ENCODE measurements at regions of chrX and their contacts with region 1.

Region 1: DNA sequence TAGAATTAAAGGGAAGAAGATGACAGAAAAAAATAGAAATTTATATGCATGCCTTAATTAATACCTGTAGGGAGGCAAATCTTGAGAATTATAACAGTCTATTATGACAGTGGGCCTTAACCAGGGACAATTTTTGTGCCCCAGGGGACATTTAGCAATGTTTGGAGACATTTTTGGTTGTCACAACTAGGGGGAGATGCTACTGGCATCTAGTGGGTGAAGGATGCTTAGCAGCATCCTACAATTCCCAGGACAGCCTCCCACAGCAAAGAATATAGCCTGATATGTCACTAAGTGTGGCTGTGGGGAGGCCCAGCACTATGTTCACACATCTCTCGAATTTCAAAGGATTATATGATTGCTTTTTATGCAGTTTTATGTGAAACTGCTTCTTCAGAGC is 10.5 kb downstream of the GPR82 start:
- DNase-seq: no peak
- ATAC-seq: peak; percentile 35
- H3K4me3 Mint-ChIP-seq: peak overlapping the region; percentile 75
- H3K27ac Mint-ChIP-seq: peak overlapping the region; percentile 85
- H3K4me1 Mint-ChIP-seq: peaks cover 41% of the 10 kb centered on the region
- H3K27me3 Mint-ChIP-seq: no peaks in the 10 kb centered on the region
- CTCF ChIP-seq: no peak

Region 2: DNA sequence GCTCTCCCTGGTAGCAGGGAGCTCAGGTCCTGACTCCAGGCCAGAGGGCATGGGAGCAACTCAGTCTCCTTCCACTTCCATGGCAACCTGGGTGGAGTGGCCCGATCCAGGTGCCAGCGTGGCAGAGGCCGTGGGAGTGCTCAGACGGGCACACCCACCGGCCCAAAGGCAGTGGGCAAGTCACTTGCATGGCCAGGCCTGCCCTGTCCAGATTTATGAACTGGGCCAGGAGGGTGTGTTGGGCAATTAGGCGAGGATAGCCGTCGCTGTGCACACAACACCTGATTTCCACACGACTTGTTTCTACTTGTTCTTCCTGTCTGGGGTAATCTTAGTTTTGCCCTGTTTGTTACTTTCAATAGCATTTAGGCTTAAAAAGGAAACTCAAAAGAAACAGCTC is 342.9 kb before region 1 on chrX:
- CTCF ChIA-PET with region 1: no interaction called
- POLR2A ChIA-PET with region 1: no interaction called
- intact Hi-C with region 1: no loop called
- DNase-seq: no peak
- ATAC-seq: no peak
- H3K4me3 Mint-ChIP-seq: no peak overlapping the region
- H3K27ac Mint-ChIP-seq: no peak overlapping the region
- H3K4me1 Mint-ChIP-seq: no peaks in the 10 kb centered on the region
- H3K27me3 Mint-ChIP-seq: no peaks in the 10 kb centered on the region
- CTCF ChIP-seq: no peak

Region 3: DNA sequence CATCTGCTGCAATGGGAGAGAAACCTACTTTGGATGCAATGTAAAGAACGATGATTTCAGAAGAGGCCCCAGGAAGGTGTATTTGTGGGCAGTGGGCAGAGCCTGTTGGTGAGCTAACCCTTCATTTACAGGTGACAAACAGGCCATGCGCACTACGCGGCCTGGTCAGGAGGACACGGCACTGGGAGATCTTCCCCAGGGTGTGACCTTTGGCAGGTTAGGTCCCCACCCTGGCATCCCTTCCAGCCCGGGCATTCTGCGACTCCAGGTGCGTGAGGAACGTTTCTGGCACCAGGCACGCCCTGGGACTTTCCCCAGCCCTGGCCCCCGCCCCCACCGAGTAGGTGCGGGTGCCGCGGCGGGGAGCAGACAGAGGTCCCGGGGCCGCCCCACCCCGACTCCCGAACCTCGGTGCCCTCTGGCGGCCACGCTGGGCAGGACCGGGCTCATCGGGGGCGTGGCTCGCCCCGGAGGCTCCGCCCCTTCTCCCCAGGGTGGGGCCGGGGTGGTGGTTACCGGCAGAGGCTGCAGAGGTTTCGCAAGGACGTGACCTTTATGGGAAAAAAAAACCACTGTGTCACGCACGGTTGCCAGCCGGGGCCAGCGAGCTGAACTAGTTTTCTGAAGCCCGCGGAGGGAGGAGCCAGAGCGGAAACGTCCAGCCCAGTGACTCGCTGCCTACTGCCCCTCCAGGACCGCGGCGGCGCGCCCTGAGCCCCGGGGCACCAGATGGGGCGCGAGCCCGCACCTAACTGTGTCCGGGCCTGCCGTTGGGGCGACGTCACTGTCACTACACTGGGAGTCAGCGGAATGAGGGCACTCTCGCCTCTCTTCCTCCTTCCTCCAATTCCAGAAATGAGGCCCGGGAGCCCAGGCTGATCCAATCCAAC is 292.4 kb before region 1 on chrX:
- CTCF ChIA-PET with region 1: no interaction called
- POLR2A ChIA-PET with region 1: interaction called, 5 read pairs
- intact Hi-C with region 1: loop called (anchors 5 kb)
- DNase-seq: peak; percentile 87
- ATAC-seq: peak; percentile 92
- H3K4me3 Mint-ChIP-seq: peak overlapping the region; percentile 73
- H3K27ac Mint-ChIP-seq: peak overlapping the region; percentile 53
- H3K4me1 Mint-ChIP-seq: peaks cover 25% of the 10 kb centered on the region
- H3K27me3 Mint-ChIP-seq: no peaks in the 10 kb centered on the region
- CTCF ChIP-seq: no peak

Region 4: DNA sequence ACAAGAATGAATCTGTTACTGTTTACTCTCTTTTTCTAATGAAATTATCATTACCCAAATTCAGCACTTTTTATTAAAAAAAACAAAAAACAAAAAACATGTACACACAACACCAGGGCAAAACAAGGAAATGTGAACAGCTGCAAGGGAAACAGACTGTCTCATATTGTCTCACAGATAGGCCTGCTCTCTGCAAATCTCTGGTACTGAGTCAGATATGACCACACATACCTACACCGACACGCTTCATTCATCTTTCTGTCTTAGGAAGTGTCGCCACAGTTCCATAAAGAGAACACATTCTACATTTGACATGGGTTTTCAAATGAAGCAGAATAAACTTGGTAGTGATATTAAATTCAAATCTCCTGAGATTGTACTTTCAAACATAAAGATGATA is 137.9 kb before region 1 on chrX:
- CTCF ChIA-PET with region 1: no interaction called
- POLR2A ChIA-PET with region 1: no interaction called
- intact Hi-C with region 1: loop called (anchors 2 kb)
- DNase-seq: no peak
- ATAC-seq: peak; percentile 95
- H3K4me3 Mint-ChIP-seq: peak overlapping the region; percentile 11
- H3K27ac Mint-ChIP-seq: peak overlapping the region; percentile 68
- H3K4me1 Mint-ChIP-seq: peaks cover 29% of the 10 kb centered on the region
- H3K27me3 Mint-ChIP-seq: no peaks in the 10 kb centered on the region
- CTCF ChIP-seq: no peak

Region 5: DNA sequence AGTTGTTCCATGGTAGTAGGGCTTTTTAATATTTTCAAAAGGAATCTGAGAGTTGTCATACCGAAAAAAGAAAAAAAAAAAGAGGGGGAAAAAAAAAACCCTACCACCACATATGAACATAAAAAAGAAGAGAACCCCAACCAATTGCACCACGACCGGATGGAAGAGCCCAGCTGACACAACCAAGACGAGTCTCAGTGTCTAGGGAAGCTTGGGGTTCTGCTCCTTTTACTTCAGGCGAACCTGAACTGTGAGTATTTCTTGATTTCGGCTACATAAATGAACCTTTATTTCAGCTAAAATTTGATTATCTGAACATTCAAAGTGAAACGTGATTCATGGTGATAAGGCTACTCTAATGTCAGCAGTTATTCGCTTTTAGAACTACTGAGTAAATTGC is 45.7 kb before region 1 on chrX and contains the start of gene GPR34:
- CTCF ChIA-PET with region 1: no interaction called
- POLR2A ChIA-PET with region 1: no interaction called
- intact Hi-C with region 1: loop called (anchors 5 kb)
- DNase-seq: no peak
- ATAC-seq: no peak
- H3K4me3 Mint-ChIP-seq: no peak within 1 kb of the TSS
- H3K27ac Mint-ChIP-seq: no peak within 1 kb of the TSS
- H3K4me1 Mint-ChIP-seq: peaks cover 53% of the 10 kb centered on the region
- H3K27me3 Mint-ChIP-seq: no peaks in the 10 kb centered on the region
- CTCF ChIP-seq: no peak
- total RNA-seq, gene GPR34: 0.24 and 0.42 TPM in 2 replicates

Region 6: GRCh38 chrX:41720125-41720779 is 14.3 kb before region 1 on chrX:
- CTCF ChIA-PET with region 1: interaction called, 3 read pairs
- POLR2A ChIA-PET with region 1: no interaction called
- intact Hi-C with region 1: loop called (anchors 1 kb)
- DNase-seq: peak; percentile 16
- ATAC-seq: peak; percentile 91
- H3K4me3 Mint-ChIP-seq: no peak overlapping the region
- H3K27ac Mint-ChIP-seq: no peak overlapping the region
- H3K4me1 Mint-ChIP-seq: peaks cover 71% of the 10 kb centered on the region
- H3K27me3 Mint-ChIP-seq: no peaks in the 10 kb centered on the region
- CTCF ChIP-seq: no peak

Region 7: DNA sequence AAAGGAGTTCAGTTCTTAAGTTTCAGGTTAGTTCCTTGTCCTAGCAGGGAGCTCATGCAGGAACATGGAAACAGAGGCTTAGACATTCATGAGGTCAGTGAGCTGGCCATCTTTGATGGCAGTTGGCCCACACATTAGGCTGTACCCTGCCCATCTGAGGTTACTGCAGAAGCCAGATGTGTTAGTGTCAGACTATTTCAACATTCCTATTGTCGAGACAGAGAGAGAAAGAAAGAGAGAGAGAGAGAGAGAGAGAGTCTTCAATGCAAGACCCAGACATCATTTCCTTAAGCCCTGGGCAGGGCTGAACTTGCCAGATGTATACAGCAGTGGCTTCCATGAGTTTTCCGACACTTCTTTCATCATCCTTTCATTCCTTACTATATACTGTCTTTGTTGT is 952.2 kb after region 1 on chrX:
- CTCF ChIA-PET with region 1: no interaction called
- POLR2A ChIA-PET with region 1: no interaction called
- intact Hi-C with region 1: no loop called
- DNase-seq: no peak
- ATAC-seq: no peak
- H3K4me3 Mint-ChIP-seq: no peak overlapping the region
- H3K27ac Mint-ChIP-seq: no peak overlapping the region
- H3K4me1 Mint-ChIP-seq: no peaks in the 10 kb centered on the region
- H3K27me3 Mint-ChIP-seq: no peaks in the 10 kb centered on the region
- CTCF ChIP-seq: no peak